ENCODE measurements at regions of chr9 and their contacts with region 1.

Region 1: GRCh38 chr9:27276193-27277030 is 20.5 kb downstream of the EQTN start:
- DNase-seq: no peak
- ATAC-seq: no peak

Region 2: DNA sequence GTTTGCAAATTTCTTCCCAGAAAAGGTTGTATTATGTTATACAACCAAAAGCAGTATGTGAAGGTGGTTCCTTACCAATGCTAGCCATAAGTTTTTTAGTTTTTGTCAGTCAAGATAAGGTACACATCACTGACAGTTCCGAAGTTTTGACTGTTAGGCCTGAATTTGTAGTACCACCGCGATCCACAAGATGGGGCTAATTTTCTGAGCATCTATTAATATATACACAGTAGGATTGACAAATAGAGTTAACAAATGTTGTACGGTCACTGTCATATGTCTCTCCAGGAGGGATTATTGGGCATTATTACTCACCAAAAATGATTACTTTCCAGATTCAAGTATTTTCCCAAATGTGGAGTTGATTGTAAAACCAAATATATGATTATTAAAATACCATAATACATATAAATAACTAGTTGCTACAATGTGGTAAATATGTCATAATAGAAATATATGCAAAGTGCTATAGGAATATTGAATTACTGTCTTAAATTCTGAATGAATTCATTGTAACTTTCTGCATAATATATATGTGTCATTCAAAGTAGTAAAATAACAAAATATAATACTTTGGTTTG is 242.5 kb before region 1 on chr9:
- intact Hi-C with region 1: loop called (anchors 2 kb)
- DNase-seq: no peak
- ATAC-seq: no peak

Region 3: DNA sequence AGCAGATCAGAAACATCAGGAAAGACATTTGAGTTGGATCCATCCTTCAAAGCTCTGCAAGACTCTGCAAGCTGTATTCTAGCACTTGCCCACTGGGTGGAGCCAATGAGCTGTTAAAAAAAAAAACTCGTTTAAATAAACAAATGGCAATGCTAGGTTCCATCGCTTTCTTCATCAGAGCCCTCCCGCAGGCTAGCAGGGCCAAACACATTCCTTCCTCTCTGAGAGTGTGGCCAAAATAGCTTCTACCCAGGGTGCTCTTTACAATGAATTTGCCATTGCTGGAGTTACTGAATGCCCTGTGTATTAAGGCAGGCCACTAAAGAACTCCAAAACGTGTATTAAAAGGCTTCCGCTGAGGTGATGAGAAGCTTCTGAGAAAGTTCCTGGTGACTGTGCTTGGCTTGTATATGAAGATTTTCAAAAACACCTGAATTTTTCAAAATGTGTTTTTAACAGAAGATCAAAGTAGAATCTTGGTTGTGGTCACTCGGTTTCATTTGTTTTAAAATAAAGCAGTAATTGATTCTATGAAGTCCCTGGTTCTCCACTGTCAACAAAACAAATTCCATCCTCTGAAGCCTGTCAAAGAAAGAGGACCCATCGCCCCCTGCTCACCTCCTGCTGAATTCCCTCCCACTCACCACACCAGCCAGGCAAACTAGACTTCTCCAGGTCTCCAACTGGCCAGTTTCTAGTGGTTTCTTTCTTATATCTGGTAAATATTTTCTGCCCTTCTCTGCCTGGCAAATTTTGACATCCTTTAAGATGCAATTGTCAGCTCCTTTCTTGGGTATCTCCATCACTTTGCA is 57.0 kb after region 1 on chr9:
- intact Hi-C with region 1: no loop called
- DNase-seq: no peak
- ATAC-seq: peak; percentile 92